Naive thymus-derived CD4-positive, alpha-beta T cell (primary cell): ENCODE measurements at regions of chr11 and their contacts with region 1.

Region 1: GRCh38 chr11:67420646-67421420 is 5.4 kb downstream of the CARNS1 start:
- DNase-seq: peak; percentile 97 to 100 (median 97)
- ATAC-seq: peak; percentile 96
- H3K4me3 ChIP-seq: peak overlapping the region; percentile 56
- H3K4me3 Mint-ChIP-seq: peak overlapping the region; percentile 74 to 92 (median 82)
- H3K27ac ChIP-seq: peak overlapping the region; percentile 77
- H3K27ac Mint-ChIP-seq: peak overlapping the region; percentile 69 to 98 (median 92)
- H3K4me1 ChIP-seq: peaks cover 42 to 49% of the 10 kb centered on the region in 2 donors
- H3K4me1 Mint-ChIP-seq: peaks cover 24 to 60% (median 53%) of the 10 kb centered on the region in 7 donors
- H3K27me3 ChIP-seq: no peaks in the 10 kb centered on the region
- H3K27me3 Mint-ChIP-seq: peaks cover 0 to 15% (median 0%) of the 10 kb centered on the region in 5 donors

Region 2: GRCh38 chr11:66976048-66976467 is 444.8 kb before region 1 on chr11:
- CTCF ChIA-PET with region 1: no interaction called
- POLR2A ChIA-PET with region 1: no interaction called
- intact Hi-C with region 1: no loop called
- DNase-seq: peak in 4 of 9 donors; percentile 8 to 28 (median 11)
- ATAC-seq: peak; percentile 37
- H3K4me3 ChIP-seq: no peak overlapping the region
- H3K4me3 Mint-ChIP-seq: no peak overlapping the region
- H3K27ac ChIP-seq: no peak overlapping the region
- H3K27ac Mint-ChIP-seq: no peak overlapping the region
- H3K4me1 ChIP-seq: no peaks in the 10 kb centered on the region
- H3K4me1 Mint-ChIP-seq: peaks cover 0 to 4% (median 0%) of the 10 kb centered on the region in 7 donors
- H3K27me3 ChIP-seq: no peaks in the 10 kb centered on the region
- H3K27me3 Mint-ChIP-seq: peaks cover 0 to 16% (median 9%) of the 10 kb centered on the region in 5 donors

Region 3: GRCh38 chr11:67409261-67409666 is 11.6 kb before region 1 on chr11:
- CTCF ChIA-PET with region 1: interaction called, 67 read pairs
- POLR2A ChIA-PET with region 1: interaction called, 1,530 read pairs
- intact Hi-C with region 1: loop called (anchors 1 kb)
- DNase-seq: peak in 8 of 9 donors; percentile 62 to 82 (median 78)
- ATAC-seq: peak; percentile 78
- H3K4me3 ChIP-seq: peak overlapping the region; percentile 98
- H3K4me3 Mint-ChIP-seq: peak overlapping the region; percentile 80 to 100 (median 96)
- H3K27ac ChIP-seq: peak overlapping the region; percentile 87
- H3K27ac Mint-ChIP-seq: peak overlapping the region; percentile 83 to 98 (median 93)
- H3K4me1 ChIP-seq: peaks cover 86% of the 10 kb centered on the region in 2 donors
- H3K4me1 Mint-ChIP-seq: peaks cover 52 to 90% (median 78%) of the 10 kb centered on the region in 7 donors
- H3K27me3 ChIP-seq: no peaks in the 10 kb centered on the region
- H3K27me3 Mint-ChIP-seq: peaks cover 0 to 8% (median 0%) of the 10 kb centered on the region in 5 donors

Region 4: DNA sequence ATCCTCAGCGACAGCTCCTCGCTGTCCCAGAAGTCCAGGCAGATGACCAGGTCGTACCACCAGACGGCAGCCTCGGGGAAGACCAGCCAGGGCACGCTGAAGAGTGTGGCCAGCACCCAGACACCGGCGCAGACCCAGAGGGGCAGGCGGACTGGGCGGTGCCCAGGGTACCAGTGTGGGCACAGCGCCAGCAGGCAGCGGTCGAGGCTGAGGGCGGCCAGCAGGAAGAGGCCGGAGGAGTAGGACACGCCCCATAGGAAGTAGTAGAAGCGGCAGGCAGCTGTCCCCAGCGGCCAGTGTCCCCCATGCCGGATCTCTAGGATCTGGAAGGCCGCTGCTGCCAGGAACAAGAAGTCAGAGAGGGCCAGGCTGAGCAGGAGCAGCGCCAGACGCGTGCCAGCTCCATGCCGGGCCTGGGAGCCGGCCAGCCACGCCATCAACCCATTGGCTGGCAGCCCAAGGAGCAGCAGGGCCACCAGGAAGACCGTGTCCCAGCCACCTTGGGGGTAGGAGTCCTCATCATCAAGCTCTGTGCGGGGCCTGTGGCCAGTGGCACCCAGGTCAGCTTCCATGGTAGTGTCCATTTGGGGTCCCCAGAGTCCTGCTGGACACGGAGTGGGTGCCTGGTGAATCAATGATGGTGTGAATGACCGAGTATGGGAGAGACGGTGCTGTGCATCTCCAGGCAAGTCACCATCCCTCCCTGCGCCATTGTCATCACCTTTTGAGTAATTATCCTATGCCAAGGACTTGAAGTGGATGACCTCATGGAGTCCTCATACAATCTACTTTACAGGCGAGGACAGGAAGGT is 31.5 kb after region 1 on chr11 and contains the start of gene GPR152:
- CTCF ChIA-PET with region 1: no interaction called
- POLR2A ChIA-PET with region 1: interaction called, 19 read pairs
- intact Hi-C with region 1: no loop called
- DNase-seq: no peak
- ATAC-seq: no peak
- H3K4me3 ChIP-seq: no peak within 1 kb of the TSS
- H3K4me3 Mint-ChIP-seq: peak within 1 kb of the TSS in 2 of 10 donors; percentile 27 to 31
- H3K27ac ChIP-seq: no peak within 1 kb of the TSS
- H3K27ac Mint-ChIP-seq: peak within 1 kb of the TSS in 4 of 9 donors; percentile 17 to 68 (median 40)
- H3K4me1 ChIP-seq: peaks cover 9 to 24% of the 10 kb centered on the region in 2 donors
- H3K4me1 Mint-ChIP-seq: peaks cover 15 to 42% (median 23%) of the 10 kb centered on the region in 7 donors
- H3K27me3 ChIP-seq: no peaks in the 10 kb centered on the region
- H3K27me3 Mint-ChIP-seq: no peaks in the 10 kb centered on the region
- total RNA-seq, gene GPR152: not detected